ENCODE measurements at regions of chr17 and their contacts with region 1.

Region 1: DNA sequence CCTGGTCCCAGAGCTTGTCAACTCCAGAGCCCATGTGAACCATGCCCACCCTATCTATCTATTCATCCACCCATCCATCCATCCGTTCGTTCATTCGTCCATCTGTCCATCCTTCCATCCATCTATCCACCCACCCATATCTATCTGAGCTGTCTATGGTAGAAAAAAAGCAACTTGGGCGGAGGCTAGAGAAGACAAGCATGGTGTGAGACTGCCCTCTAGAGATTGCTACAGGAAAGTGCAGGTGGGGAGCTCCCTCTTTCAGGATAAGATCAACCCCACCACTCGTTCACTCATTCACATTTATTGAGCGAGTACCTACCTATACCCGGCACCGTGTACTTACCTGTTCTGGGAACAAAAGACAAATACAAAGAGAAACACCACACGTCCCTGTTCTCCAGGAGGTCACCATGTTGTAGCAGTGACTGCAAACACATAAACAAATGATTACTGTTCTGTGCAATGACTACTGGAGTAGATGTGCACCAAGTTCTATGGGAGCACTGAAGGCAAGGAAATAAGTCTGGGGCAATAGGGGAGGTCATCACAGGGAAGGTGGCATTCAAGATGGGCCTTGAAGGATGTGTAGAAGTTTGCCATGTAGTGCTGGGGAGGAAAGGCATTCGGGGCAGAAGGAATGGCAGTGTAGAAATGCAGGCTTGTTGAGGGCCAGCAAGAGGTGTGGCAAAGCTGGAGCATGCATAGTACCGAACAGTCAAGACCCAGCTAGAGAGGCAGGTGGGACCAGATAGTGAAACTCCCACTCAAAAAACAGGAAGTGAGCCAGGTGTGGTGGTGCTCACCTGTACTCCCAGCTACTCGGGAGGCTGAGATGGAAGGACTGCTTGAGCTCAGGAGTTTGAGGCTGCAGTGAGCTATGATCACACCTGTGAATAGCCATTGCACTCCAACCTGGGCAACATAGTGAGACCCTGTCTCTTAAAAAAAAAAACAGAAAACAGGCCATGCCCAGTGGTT is 13.4 kb upstream of the ATP5MC1 start:
- DNase-seq: peak; percentile 55
- ATAC-seq: peak; percentile 89
- H3K4me3 ChIP-seq: no peak overlapping the region
- H3K27ac ChIP-seq: no peak overlapping the region
- H3K4me1 ChIP-seq: peaks cover 23% of the 10 kb centered on the region
- H3K27me3 ChIP-seq: no peaks in the 10 kb centered on the region
- CTCF ChIP-seq: peak; percentile 93 to 99 (median 98); a peak in 5 of 6 replicates
- EP300 ChIP-seq: no peak
- POLR2A ChIP-seq: no peak
- RAD21 ChIP-seq: peak; percentile 99

Region 2: DNA sequence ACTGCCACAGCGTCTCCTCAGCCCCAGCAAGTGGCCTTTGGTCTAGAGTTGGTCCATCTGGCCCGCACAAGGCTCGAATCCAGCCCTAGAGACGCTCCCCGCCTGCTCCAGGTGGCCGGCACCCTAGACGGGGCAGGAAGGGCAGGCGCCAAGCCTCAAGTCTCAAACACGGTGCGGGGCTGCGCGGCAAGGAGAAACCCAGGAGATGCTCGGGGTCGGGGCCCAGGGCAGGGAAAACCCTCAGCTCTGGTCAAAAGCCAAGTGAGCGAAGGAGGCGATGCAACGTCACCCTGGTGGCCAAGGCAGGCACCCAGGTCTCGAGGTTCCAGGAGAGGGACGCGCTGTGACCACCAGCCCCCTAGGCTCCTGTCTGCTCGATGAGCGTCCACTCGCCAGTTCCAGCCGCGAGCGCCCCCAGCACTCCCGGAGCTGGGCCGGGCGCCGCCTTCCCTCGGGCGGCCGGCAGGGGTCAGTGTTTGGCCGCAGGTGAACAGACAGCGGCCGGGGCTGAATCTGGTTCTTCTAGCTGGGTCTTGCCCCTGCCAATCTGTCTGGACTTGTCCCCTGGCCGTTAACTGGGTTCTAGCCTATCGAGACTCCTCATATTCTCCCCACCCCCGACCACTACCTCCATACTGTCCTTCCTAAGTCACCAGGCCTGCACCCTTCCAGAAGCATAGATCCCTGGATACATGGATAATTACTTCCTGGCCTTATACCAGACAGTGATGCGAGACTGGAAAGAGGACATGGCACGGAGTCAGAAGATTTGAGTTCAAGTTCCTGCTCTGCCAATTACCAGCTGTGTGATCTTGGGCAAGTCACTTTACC is 200.9 kb before region 1 on chr17:
- CTCF ChIA-PET with region 1: interaction called, 271 read pairs
- POLR2A ChIA-PET with region 1: interaction called, 5 read pairs
- RAD21 ChIA-PET with region 1: interaction called, 93 read pairs
- SMC1A ChIA-PET with region 1: interaction called, 77 read pairs
- in situ Hi-C with region 1: loop called (anchors 5 kb)
- intact Hi-C with region 1: loop called (anchors 1 kb)
- DNase-seq: peak; percentile 9
- ATAC-seq: peak; percentile 99
- H3K4me3 ChIP-seq: no peak overlapping the region
- H3K27ac ChIP-seq: no peak overlapping the region
- H3K4me1 ChIP-seq: 0 out of 2 replicates have a peak, but pooled peaks cover 2% of the 10 kb centered on the region
- H3K27me3 ChIP-seq: no peaks in the 10 kb centered on the region; a peak in 1 of 4 replicates
- CTCF ChIP-seq: peak; percentile 95 to 96 (median 96)
- EP300 ChIP-seq: no peak
- POLR2A ChIP-seq: no peak
- RAD21 ChIP-seq: peak; percentile 85

Region 3: DNA sequence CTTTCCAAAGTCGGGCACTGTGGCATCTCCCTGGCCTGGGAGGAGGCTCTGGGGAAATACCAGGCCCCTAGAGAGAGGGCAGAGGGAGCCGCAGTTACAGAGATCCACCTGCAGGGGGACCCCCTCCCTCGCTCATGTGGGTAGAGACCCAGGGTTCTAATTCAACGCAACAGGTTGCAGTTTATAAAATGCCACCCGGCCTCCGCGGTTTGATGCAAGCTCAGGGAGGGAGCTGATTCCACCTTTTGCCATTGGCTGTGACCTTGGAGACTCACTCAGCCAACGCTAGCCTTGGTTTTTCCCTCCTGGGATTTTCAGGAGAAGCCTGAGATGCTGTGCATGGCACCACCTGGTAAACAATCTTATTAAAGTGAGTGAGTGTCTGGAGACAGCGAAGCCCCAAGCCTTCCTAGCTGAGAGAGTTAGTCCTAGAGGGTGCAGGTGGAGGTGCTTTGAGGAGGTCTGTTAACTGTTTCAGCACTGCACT is 74.2 kb before region 1 on chr17:
- CTCF ChIA-PET with region 1: interaction called, 490 read pairs
- POLR2A ChIA-PET with region 1: interaction called, 4 read pairs
- RAD21 ChIA-PET with region 1: interaction called, 376 read pairs
- SMC1A ChIA-PET with region 1: interaction called, 281 read pairs
- in situ Hi-C with region 1: loop called (anchors 5 kb)
- intact Hi-C with region 1: loop called (anchors 1 kb)
- DNase-seq: no peak
- ATAC-seq: peak; percentile 98
- H3K4me3 ChIP-seq: no peak overlapping the region
- H3K27ac ChIP-seq: no peak overlapping the region
- H3K4me1 ChIP-seq: no peaks in the 10 kb centered on the region
- H3K27me3 ChIP-seq: no peaks in the 10 kb centered on the region; a peak in 2 of 4 replicates
- CTCF ChIP-seq: peak; percentile 89 to 95 (median 90)
- EP300 ChIP-seq: no peak
- POLR2A ChIP-seq: no peak
- RAD21 ChIP-seq: peak; percentile 93

Region 4: GRCh38 chr17:48836004-48836403 is 43.2 kb before region 1 on chr17:
- CTCF ChIA-PET with region 1: interaction called, 47 read pairs
- POLR2A ChIA-PET with region 1: interaction called, 4 read pairs
- RAD21 ChIA-PET with region 1: interaction called, 15 read pairs
- SMC1A ChIA-PET with region 1: interaction called, 24 read pairs
- in situ Hi-C with region 1: no loop called
- intact Hi-C with region 1: no loop called
- DNase-seq: no peak
- ATAC-seq: peak; percentile 53
- H3K4me3 ChIP-seq: peak overlapping the region; percentile 46; the same call in 1 of the 2 replicates
- H3K27ac ChIP-seq: peak overlapping the region; percentile 53; the same call in 1 of the 2 replicates
- H3K4me1 ChIP-seq: peaks cover 53% of the 10 kb centered on the region
- H3K27me3 ChIP-seq: no peaks in the 10 kb centered on the region
- CTCF ChIP-seq: no peak
- EP300 ChIP-seq: no peak
- POLR2A ChIP-seq: no peak
- RAD21 ChIP-seq: no peak

Region 5: DNA sequence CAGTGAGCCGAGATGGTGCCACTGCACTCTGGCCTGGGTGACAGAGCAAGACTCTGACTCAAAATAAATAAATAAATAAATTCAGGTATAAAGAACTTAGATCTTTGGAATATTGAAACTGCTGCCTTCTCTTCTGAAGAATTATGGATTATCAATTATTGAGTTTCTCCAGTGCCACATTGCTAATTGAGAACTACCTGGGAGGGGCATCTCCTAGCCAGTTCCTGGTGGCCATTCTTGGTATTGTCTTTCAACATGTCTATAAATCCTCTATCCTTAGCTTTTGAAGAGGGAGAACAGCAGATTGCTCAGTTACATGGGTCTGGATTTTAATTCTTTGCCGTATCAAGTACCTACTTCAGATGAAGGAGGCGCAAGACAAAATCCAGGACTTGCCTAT is 19.2 kb before region 1 on chr17:
- CTCF ChIA-PET with region 1: interaction called, 22 read pairs
- POLR2A ChIA-PET with region 1: interaction called, 3 read pairs
- RAD21 ChIA-PET with region 1: interaction called, 6 read pairs
- SMC1A ChIA-PET with region 1: interaction called, 17 read pairs
- in situ Hi-C with region 1: no loop called
- intact Hi-C with region 1: no loop called
- DNase-seq: no peak
- ATAC-seq: no peak
- H3K4me3 ChIP-seq: no peak overlapping the region
- H3K27ac ChIP-seq: no peak overlapping the region
- H3K4me1 ChIP-seq: no peaks in the 10 kb centered on the region
- H3K27me3 ChIP-seq: no peaks in the 10 kb centered on the region
- CTCF ChIP-seq: peak in 1 of 3 experiments; percentile 17; a peak in 1 of 6 replicates
- EP300 ChIP-seq: no peak
- POLR2A ChIP-seq: no peak
- RAD21 ChIP-seq: no peak

Region 6: GRCh38 chr17:48927978-48928732 is 48.9 kb after region 1 on chr17:
- CTCF ChIA-PET with region 1: no interaction called
- POLR2A ChIA-PET with region 1: no interaction called
- RAD21 ChIA-PET with region 1: no interaction called
- SMC1A ChIA-PET with region 1: no interaction called
- in situ Hi-C with region 1: no loop called
- intact Hi-C with region 1: no loop called
- DNase-seq: no peak
- ATAC-seq: no peak
- H3K4me3 ChIP-seq: no peak overlapping the region
- H3K27ac ChIP-seq: no peak overlapping the region
- H3K4me1 ChIP-seq: no peaks in the 10 kb centered on the region
- H3K27me3 ChIP-seq: no peaks in the 10 kb centered on the region
- CTCF ChIP-seq: no peak
- EP300 ChIP-seq: no peak
- POLR2A ChIP-seq: peak; percentile 59
- RAD21 ChIP-seq: no peak

Region 7: GRCh38 chr17:49031965-49032928 is 153.0 kb after region 1 on chr17:
- CTCF ChIA-PET with region 1: interaction called, 115 read pairs
- POLR2A ChIA-PET with region 1: interaction called, 4 read pairs
- RAD21 ChIA-PET with region 1: interaction called, 19 read pairs
- SMC1A ChIA-PET with region 1: interaction called, 20 read pairs
- in situ Hi-C with region 1: loop called (anchors 5 kb)
- intact Hi-C with region 1: loop called (anchors 1 kb)
- DNase-seq: peak; percentile 16
- ATAC-seq: peak; percentile 92
- H3K4me3 ChIP-seq: no peak overlapping the region
- H3K27ac ChIP-seq: no peak overlapping the region
- H3K4me1 ChIP-seq: no peaks in the 10 kb centered on the region
- H3K27me3 ChIP-seq: no peaks in the 10 kb centered on the region
- CTCF ChIP-seq: peak; percentile 69 to 96 (median 86)
- EP300 ChIP-seq: no peak
- POLR2A ChIP-seq: no peak
- RAD21 ChIP-seq: peak; percentile 97